CD4-positive, alpha-beta T cell (primary cell): ENCODE measurements at regions of chr5 and their contacts with region 1.

Region 1: GRCh38 chr5:43313035-43313853 is at the start of gene HMGCS1:
- DNase-seq: peak; percentile 93 to 100 (median 98)
- ATAC-seq: peak; percentile 87
- H3K4me3 ChIP-seq: peak within 1 kb of the TSS; percentile 88
- H3K4me3 Mint-ChIP-seq: peak within 1 kb of the TSS; percentile 95
- H3K27ac ChIP-seq: peak within 1 kb of the TSS; percentile 96 to 97
- H3K27ac Mint-ChIP-seq: peak within 1 kb of the TSS; percentile 88
- H3K4me1 ChIP-seq: peaks cover 16% of the 10 kb centered on the region
- H3K4me1 Mint-ChIP-seq: peaks cover 24% of the 10 kb centered on the region
- H3K27me3 ChIP-seq: no peaks in the 10 kb centered on the region
- H3K27me3 Mint-ChIP-seq: no peaks in the 10 kb centered on the region
- CTCF ChIP-seq: no peak
- total RNA-seq, gene HMGCS1: 43.3 to 52.7 TPM

Region 2: DNA sequence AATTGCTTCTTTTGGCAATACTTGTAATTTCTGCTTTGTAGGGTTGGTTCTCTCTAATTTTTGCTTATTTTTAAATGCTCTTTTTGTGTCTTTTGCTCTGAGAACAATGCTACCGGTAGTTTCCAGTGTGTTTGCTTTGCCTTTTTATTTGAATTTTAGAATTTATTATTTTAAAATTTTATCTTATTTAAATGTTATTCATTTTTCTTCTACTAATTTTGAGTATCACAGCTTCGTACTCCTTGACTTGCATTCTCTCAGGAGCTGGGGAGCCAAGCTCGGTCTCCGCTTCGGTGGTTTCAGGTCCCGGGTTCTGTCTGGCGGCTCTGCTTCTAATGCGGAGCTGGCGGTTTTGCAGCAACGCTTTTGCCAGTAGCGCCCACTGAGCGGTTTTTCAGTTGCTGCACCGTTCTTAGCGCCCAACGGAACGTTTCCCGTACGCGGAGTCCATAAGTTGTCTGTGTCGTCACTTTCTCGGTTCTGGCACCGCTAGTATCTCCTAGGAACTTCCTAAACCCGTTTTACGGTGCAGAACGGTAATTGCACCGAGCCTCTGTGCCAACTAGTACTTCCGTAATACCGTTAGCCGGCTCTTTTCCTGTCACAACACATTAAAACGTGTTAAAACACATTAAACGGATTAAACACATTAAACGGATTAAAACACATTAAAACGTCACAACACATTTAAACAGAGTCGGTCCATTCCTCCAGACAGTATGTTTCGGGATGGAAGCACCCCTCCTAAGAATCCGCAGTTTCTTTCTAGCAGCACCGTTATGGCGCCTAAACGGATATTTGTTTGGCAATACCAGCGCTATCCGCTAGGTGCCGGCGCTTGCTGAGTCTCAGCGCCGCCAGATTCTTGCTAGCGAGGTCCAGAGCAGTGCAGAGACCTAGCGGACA is 318.7 kb before region 1 on chr5:
- CTCF ChIA-PET with region 1: no interaction called
- POLR2A ChIA-PET with region 1: interaction called, 55 read pairs
- intact Hi-C with region 1: loop called in 1 of 2 experiments (anchors 10 kb)
- DNase-seq: peak; percentile 81 to 94 (median 84)
- ATAC-seq: peak; percentile 59
- H3K4me3 ChIP-seq: peak overlapping the region; percentile 80
- H3K4me3 Mint-ChIP-seq: peak overlapping the region; percentile 100
- H3K27ac ChIP-seq: peak overlapping the region; percentile 93 to 98
- H3K27ac Mint-ChIP-seq: peak overlapping the region; percentile 99
- H3K4me1 ChIP-seq: peaks cover 46% of the 10 kb centered on the region
- H3K4me1 Mint-ChIP-seq: peaks cover 48% of the 10 kb centered on the region
- H3K27me3 ChIP-seq: no peaks in the 10 kb centered on the region
- H3K27me3 Mint-ChIP-seq: peaks cover 9% of the 10 kb centered on the region
- CTCF ChIP-seq: peak; percentile 85

Region 3: DNA sequence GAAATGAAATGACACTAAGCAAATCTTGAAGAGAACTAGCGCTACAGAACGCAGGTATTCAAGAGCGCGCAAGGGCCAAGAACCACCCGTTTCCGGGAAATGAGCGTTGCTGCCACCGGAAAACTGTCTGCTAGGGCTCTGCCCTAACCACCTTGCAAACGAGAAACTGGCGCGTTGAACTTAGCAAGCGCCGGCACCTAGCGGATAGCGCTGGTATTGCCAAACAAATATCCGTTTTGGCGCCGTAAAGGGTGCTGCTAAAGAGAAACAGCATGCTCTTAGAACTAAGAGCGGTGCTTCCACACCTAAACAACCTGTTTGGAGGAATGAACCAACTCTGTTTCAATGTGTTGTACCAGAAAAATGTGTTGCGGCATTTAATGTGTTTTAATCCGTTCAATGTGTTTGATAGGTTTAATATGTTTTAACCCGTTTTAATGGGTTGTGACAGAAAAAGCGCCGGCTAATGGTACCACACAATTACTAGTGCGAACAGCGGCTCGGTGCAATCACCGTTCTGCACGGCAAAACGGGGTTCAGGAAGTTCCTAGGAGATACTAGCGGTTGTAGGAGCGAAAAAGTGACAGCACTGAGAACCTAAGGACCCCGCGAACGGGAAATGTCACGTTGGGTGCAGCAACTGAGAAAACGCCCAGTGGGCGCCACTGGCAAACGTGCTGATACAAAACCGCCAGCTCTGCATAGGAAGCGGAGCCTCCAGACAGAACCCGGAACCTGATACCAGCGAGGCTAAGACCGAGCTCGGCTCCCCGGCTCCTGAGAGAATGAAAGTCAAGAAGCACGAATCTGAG is 272.8 kb before region 1 on chr5 and contains the start of gene ANXA2R:
- CTCF ChIA-PET with region 1: no interaction called
- POLR2A ChIA-PET with region 1: interaction called, 39 read pairs
- intact Hi-C with region 1: no loop called
- DNase-seq: peak; percentile 90 to 98 (median 93)
- ATAC-seq: peak; percentile 53
- H3K4me3 ChIP-seq: peak within 1 kb of the TSS; percentile 84
- H3K4me3 Mint-ChIP-seq: peak within 1 kb of the TSS; percentile 98
- H3K27ac ChIP-seq: peak within 1 kb of the TSS; percentile 96 to 98
- H3K27ac Mint-ChIP-seq: peak within 1 kb of the TSS; percentile 98
- H3K4me1 ChIP-seq: peaks cover 73% of the 10 kb centered on the region
- H3K4me1 Mint-ChIP-seq: peaks cover 46% of the 10 kb centered on the region
- H3K27me3 ChIP-seq: no peaks in the 10 kb centered on the region
- H3K27me3 Mint-ChIP-seq: no peaks in the 10 kb centered on the region
- CTCF ChIP-seq: peak; percentile 86
- total RNA-seq, gene ANXA2R: 45.6 to 48.9 TPM

Region 4: DNA sequence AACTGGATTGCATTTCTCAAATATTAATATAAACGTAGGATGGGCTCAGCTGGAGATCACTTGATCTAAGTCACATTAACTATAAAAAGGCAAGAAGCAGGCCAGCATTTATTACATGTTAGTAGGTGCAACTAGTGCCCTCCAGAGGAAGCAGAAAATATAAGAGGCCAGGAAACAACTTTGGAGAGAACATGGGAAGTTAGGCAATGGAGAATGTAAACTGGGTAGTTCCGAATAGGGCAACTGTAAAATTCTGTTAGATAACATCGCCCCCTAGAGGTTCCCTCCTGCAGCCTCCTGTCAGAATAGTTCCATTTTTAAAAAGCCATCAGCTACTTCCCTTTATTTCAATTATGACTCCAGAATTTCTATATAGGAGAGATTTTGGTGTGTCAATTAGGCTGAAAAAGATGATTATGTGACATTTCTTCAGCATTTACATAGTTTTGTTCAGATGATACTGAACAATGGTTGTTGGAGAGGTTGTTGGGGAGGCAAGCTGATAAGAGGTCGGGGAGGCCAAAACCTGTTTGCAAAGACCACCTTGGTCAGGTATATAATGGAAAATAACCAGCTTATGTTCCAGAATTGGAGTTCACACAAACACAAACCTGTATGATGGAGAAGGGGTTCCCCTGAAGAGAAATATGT is 76.6 kb after region 1 on chr5:
- CTCF ChIA-PET with region 1: interaction called, 5 read pairs
- POLR2A ChIA-PET with region 1: interaction called, 3 read pairs
- intact Hi-C with region 1: loop called in 1 of 2 experiments (anchors 2 kb)
- DNase-seq: peak in 12 of 14 experiments; percentile 6 to 79 (median 18)
- ATAC-seq: peak; percentile 82
- H3K4me3 ChIP-seq: no peak overlapping the region
- H3K4me3 Mint-ChIP-seq: no peak overlapping the region
- H3K27ac ChIP-seq: no peak overlapping the region
- H3K27ac Mint-ChIP-seq: peak overlapping the region; percentile 28
- H3K4me1 ChIP-seq: no peaks in the 10 kb centered on the region
- H3K4me1 Mint-ChIP-seq: peaks cover 27% of the 10 kb centered on the region
- H3K27me3 ChIP-seq: no peaks in the 10 kb centered on the region
- H3K27me3 Mint-ChIP-seq: no peaks in the 10 kb centered on the region
- CTCF ChIP-seq: peak; percentile 85

Region 5: DNA sequence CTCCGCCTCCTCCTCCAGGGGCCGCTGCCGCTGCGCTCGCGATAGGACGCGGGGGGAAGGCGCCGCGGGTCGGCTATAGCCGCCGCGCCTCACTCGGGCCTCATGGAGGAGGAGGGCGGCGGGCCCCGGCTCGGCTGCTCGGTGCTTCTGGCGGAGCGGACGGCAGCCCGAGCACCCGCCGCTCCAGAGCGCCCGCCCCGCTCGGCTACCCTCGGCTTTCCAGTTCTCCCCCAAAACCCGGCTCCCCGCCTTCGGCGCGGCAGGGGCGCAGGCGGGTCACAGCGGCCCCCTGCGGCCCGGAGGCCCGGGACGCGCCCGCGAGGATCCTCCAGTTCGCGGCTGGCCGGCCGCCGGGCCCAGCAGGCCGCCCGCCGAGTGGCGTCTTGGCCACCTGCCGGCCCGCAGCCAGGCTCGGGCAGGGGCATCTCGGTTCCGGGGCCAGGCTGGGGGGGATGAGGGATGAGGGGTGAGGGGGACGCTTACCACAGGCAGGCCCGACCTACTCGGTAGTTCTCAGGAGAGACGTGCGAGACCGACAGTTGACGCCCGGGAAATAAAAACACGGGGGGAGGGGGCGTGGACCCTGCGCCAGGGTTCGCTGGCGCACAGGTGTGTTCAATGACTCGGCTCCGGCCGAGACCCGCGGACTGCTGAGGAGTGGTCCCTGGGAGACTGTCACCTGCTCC is 243.8 kb after region 1 on chr5 and contains the start of gene PAIP1:
- CTCF ChIA-PET with region 1: no interaction called
- POLR2A ChIA-PET with region 1: interaction called, 4 read pairs
- intact Hi-C with region 1: loop called (anchors 5 kb)
- DNase-seq: peak; percentile 65 to 93 (median 78)
- ATAC-seq: peak; percentile 82
- H3K4me3 ChIP-seq: peak within 1 kb of the TSS; percentile 96
- H3K4me3 Mint-ChIP-seq: peak within 1 kb of the TSS; percentile 97
- H3K27ac ChIP-seq: peak within 1 kb of the TSS; percentile 85 to 89
- H3K27ac Mint-ChIP-seq: peak within 1 kb of the TSS; percentile 94
- H3K4me1 ChIP-seq: peaks cover 27% of the 10 kb centered on the region
- H3K4me1 Mint-ChIP-seq: peaks cover 6% of the 10 kb centered on the region
- H3K27me3 ChIP-seq: no peaks in the 10 kb centered on the region
- H3K27me3 Mint-ChIP-seq: peaks cover 11% of the 10 kb centered on the region
- CTCF ChIP-seq: peak; percentile 59
- total RNA-seq, gene PAIP1: 33.9 to 35.1 TPM

Region 6: GRCh38 chr5:44808435-44809214 is 1495.4 kb after region 1 on chr5 and contains the start of gene MRPS30:
- CTCF ChIA-PET with region 1: no interaction called
- POLR2A ChIA-PET with region 1: no interaction called
- intact Hi-C with region 1: loop called in 1 of 2 experiments (anchors 10 kb)
- DNase-seq: peak; percentile 74 to 97 (median 84)
- ATAC-seq: peak; percentile 94
- H3K4me3 ChIP-seq: peak within 1 kb of the TSS; percentile 85
- H3K4me3 Mint-ChIP-seq: peak within 1 kb of the TSS; percentile 95
- H3K27ac ChIP-seq: peak within 1 kb of the TSS; percentile 80 to 87
- H3K27ac Mint-ChIP-seq: peak within 1 kb of the TSS; percentile 97
- H3K4me1 ChIP-seq: peaks cover 11% of the 10 kb centered on the region
- H3K4me1 Mint-ChIP-seq: peaks cover 35% of the 10 kb centered on the region
- H3K27me3 ChIP-seq: no peaks in the 10 kb centered on the region
- H3K27me3 Mint-ChIP-seq: no peaks in the 10 kb centered on the region
- CTCF ChIP-seq: peak; percentile 50
- total RNA-seq, gene MRPS30: 43.2 to 43.8 TPM